CD4-positive, alpha-beta T cell (primary cell): ENCODE measurements at regions of chr14 and their contacts with region 1.

Region 1: DNA sequence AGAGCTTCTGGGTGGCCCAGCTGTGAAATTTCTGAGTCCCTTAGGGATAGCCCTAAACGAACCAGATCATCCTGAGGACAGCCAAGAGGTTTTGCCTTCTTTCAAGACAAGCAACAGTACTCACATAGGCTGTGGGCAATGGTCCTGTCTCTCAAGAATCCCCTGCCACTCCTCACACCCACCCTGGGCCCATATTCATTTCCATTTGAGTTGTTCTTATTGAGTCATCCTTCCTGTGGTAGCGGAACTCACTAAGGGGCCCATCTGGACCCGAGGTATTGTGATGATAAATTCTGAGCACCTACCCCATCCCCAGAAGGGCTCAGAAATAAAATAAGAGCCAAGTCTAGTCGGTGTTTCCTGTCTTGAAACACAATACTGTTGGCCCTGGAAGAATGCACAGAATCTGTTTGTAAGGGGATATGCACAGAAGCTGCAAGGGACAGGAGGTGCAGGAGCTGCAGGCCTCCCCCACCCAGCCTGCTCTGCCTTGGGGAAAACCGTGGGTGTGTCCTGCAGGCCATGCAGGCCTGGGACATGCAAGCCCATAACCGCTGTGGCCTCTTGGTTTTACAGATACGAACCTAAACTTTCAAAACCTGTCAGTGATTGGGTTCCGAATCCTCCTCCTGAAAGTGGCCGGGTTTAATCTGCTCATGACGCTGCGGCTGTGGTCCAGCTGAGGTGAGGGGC is 38.9 kb downstream of the DAD1 start:
- DNase-seq: peak in 12 of 14 experiments; percentile 44 to 84 (median 65)
- ATAC-seq: peak; percentile 62
- H3K4me3 ChIP-seq: peak overlapping the region; percentile 10
- H3K4me3 Mint-ChIP-seq: peak overlapping the region; percentile 85
- H3K27ac ChIP-seq: peak overlapping the region; percentile 99
- H3K27ac Mint-ChIP-seq: peak overlapping the region; percentile 93
- H3K4me1 ChIP-seq: peaks cover 100% of the 10 kb centered on the region
- H3K4me1 Mint-ChIP-seq: peaks cover 97% of the 10 kb centered on the region
- H3K27me3 ChIP-seq: no peaks in the 10 kb centered on the region
- H3K27me3 Mint-ChIP-seq: no peaks in the 10 kb centered on the region
- CTCF ChIP-seq: no peak

Region 2: GRCh38 chr14:21723431-21724045 is 826.6 kb before region 1 on chr14:
- CTCF ChIA-PET with region 1: interaction called, 6 read pairs
- POLR2A ChIA-PET with region 1: interaction called, 11 read pairs
- intact Hi-C with region 1: no loop called
- DNase-seq: peak in 11 of 14 experiments; percentile 18 to 72 (median 32)
- ATAC-seq: peak; percentile 82
- H3K4me3 ChIP-seq: peak overlapping the region; percentile 44
- H3K4me3 Mint-ChIP-seq: peak overlapping the region; percentile 85
- H3K27ac ChIP-seq: no peak overlapping the region
- H3K27ac Mint-ChIP-seq: peak overlapping the region; percentile 75
- H3K4me1 ChIP-seq: no peaks in the 10 kb centered on the region
- H3K4me1 Mint-ChIP-seq: no peaks in the 10 kb centered on the region
- H3K27me3 ChIP-seq: peaks cover 0 to 5% of the 10 kb centered on the region in 2 experiments
- H3K27me3 Mint-ChIP-seq: peaks cover 51% of the 10 kb centered on the region
- CTCF ChIP-seq: peak; percentile 32

Region 3: GRCh38 chr14:22505697-22506377 is 44.3 kb before region 1 on chr14:
- CTCF ChIA-PET with region 1: interaction called, 4 read pairs
- POLR2A ChIA-PET with region 1: interaction called, 613 read pairs
- intact Hi-C with region 1: loop called (anchors 2 to 5 kb)
- DNase-seq: peak in 5 of 14 experiments; percentile 26 to 65 (median 56)
- ATAC-seq: peak; percentile 36
- H3K4me3 ChIP-seq: peak overlapping the region; percentile 61
- H3K4me3 Mint-ChIP-seq: peak overlapping the region; percentile 77
- H3K27ac ChIP-seq: peak overlapping the region; percentile 77 to 99
- H3K27ac Mint-ChIP-seq: peak overlapping the region; percentile 93
- H3K4me1 ChIP-seq: peaks cover 45% of the 10 kb centered on the region
- H3K4me1 Mint-ChIP-seq: peaks cover 79% of the 10 kb centered on the region
- H3K27me3 ChIP-seq: no peaks in the 10 kb centered on the region
- H3K27me3 Mint-ChIP-seq: no peaks in the 10 kb centered on the region
- CTCF ChIP-seq: no peak

Region 4: DNA sequence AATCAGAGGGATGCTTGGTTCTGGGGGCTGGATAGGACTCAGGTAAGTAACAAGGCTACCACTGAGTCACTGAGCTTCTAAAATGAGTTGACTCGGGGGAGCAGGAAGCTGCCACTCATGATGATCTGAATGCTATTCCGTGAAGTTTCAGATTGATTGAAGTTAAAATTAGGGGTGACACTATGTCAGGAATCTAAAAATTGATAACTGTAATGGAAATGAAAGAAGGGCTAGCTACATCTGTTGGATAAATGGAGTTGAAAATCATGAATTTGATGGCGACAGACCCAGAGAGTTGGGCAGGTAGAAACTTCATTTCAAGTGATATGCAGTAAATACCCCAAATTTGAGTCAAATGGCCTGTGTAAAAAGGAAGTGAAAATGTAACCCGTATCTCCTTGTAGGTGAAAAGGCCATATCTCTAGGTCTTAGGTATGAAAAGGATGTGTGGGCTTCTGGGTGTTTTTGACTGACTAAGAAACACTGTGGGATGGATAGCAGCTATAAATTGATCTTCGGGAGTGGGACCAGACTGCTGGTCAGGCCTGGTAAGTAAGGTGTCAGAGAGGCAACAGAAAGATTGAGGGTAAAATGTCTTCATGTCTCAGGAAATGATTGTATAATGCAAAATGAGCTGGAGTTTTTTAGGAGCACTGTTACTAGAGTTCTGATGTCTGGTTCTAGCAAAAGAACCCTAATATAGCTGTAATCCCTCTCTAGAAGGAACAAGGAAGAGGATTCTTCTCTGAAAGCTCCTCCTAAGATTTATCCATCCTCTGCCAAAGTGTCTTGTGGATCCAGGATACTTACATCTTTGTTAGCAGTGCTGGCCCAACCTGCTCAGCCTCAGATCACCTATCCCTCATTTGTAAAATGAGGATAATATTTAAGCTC is 18.4 kb before region 1 on chr14:
- CTCF ChIA-PET with region 1: interaction called, 41 read pairs
- POLR2A ChIA-PET with region 1: interaction called, 331 read pairs
- intact Hi-C with region 1: loop called in 1 of 2 experiments (anchors 2 kb)
- DNase-seq: peak in 3 of 14 experiments; percentile 45 to 73 (median 48)
- ATAC-seq: peak; percentile 51
- H3K4me3 ChIP-seq: peak overlapping the region; percentile 61
- H3K4me3 Mint-ChIP-seq: peak overlapping the region; percentile 86
- H3K27ac ChIP-seq: peak overlapping the region; percentile 52 to 99
- H3K27ac Mint-ChIP-seq: peak overlapping the region; percentile 93
- H3K4me1 ChIP-seq: peaks cover 79% of the 10 kb centered on the region
- H3K4me1 Mint-ChIP-seq: peaks cover 95% of the 10 kb centered on the region
- H3K27me3 ChIP-seq: no peaks in the 10 kb centered on the region
- H3K27me3 Mint-ChIP-seq: no peaks in the 10 kb centered on the region
- CTCF ChIP-seq: no peak

Region 5: GRCh38 chr14:22589096-22589839 is 39.1 kb after region 1 on chr14 and contains the start of gene DAD1:
- CTCF ChIA-PET with region 1: no interaction called
- POLR2A ChIA-PET with region 1: interaction called, 137 read pairs
- intact Hi-C with region 1: no loop called
- DNase-seq: peak; percentile 98 to 100 (median 100)
- ATAC-seq: peak; percentile 87
- H3K4me3 ChIP-seq: peak within 1 kb of the TSS; percentile 82
- H3K4me3 Mint-ChIP-seq: peak within 1 kb of the TSS; percentile 96
- H3K27ac ChIP-seq: peak within 1 kb of the TSS; percentile 92 to 96
- H3K27ac Mint-ChIP-seq: peak within 1 kb of the TSS; percentile 98
- H3K4me1 ChIP-seq: peaks cover 39% of the 10 kb centered on the region
- H3K4me1 Mint-ChIP-seq: peaks cover 60% of the 10 kb centered on the region
- H3K27me3 ChIP-seq: no peaks in the 10 kb centered on the region
- H3K27me3 Mint-ChIP-seq: no peaks in the 10 kb centered on the region
- CTCF ChIP-seq: no peak
- total RNA-seq, gene DAD1: 41.8 to 44.1 TPM

Region 6: GRCh38 chr14:23646648-23647549 is 1096.8 kb after region 1 on chr14:
- CTCF ChIA-PET with region 1: no interaction called
- POLR2A ChIA-PET with region 1: no interaction called
- intact Hi-C with region 1: no loop called
- DNase-seq: no peak
- ATAC-seq: no peak
- H3K4me3 ChIP-seq: no peak overlapping the region
- H3K4me3 Mint-ChIP-seq: no peak overlapping the region
- H3K27ac ChIP-seq: no peak overlapping the region
- H3K27ac Mint-ChIP-seq: no peak overlapping the region
- H3K4me1 ChIP-seq: no peaks in the 10 kb centered on the region
- H3K4me1 Mint-ChIP-seq: no peaks in the 10 kb centered on the region
- H3K27me3 ChIP-seq: peaks cover 0 to 2% of the 10 kb centered on the region in 2 experiments
- H3K27me3 Mint-ChIP-seq: peaks cover 8% of the 10 kb centered on the region
- CTCF ChIP-seq: no peak